Endothelial cell of umbilical vein (primary cell): ENCODE measurements at regions of chr12 and their contacts with region 1.

Region 1: DNA sequence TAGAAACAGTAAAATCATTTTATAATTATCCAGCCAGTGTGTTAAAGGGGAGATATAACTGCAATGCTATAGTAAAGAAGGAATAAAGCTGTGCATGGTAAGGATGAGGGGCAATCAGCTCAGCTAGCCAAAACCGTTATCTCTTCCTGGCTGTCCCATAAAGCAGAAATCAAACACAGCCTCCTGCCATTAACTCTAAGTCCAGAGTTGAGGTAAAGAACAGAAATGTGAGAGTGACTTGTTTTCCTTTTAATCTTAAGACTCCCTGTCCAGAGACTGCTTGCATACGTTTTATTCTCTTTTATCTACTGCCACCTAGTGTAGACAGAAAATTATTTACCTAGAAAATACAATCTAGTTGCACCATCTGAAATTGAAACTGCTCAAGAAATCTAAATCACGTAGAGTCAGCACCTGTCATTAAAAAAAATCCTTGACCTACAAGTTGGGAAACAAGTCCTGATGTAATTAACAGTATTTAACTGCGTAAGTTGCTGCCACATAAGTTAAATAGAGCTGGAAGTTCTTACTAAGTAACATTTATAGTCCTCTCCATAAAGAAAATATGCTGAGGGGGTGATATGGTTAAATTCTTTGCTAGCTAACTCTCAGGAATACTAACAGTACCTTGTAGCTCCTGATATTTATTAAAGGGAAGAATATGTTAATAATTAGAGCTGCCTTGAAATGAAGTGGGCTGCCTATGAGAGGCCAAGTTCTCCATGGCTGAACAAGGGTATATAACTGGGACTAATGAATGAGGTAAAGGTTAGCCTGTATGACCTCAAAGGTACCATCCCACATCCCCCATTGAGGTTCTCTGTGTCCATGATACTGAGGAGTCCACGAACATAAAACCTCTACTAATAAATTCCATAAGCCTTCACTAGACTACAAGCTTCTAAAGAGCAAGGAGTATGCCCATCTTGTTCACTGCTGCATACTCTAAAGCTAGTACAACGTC is 62.7 kb downstream of the GALNT4 start:
- DNase-seq: peak; percentile 85
- H3K4me3 ChIP-seq: peak overlapping the region in 1 of 3 experiments; percentile 21
- H3K27ac ChIP-seq: peak overlapping the region; percentile 79
- H3K4me1 ChIP-seq: peaks cover 24% of the 10 kb centered on the region
- H3K27me3 ChIP-seq: no peaks in the 10 kb centered on the region
- CTCF ChIP-seq: peak in 1 of 2 donors; percentile 26
- POLR2A ChIP-seq: no peak

Region 2: DNA sequence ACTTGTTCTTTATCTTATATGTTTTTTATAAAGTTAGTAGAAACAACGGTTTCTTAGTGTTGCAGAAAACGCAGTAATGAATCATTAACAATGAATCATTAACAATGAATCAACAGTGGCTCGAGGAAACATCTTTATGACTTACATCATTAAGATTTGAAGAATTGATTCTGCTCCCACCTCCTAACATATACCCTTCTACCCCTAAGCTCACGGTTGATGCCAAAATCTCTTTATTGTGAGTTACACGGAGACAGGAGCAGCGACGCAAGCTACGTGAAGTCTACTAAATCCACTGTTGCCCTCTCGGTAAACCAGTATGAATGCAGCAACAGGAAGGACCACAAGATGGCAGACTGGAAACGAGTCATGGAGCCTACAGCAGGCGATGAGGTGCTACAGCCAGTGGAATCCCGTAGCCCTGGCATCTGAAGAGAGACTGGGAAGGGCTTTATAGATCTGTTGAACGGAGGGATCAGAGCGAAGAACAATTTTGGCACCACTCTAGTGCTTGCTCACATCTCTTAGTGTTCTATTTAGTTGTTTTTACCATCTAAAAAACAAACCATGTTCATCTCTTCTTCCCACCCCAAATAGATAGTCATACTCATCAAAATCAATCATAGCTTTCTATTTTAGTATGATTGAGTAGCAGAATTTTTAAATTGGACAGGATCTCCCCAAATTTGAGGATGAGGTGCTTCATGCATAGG is 442.4 kb before region 1 on chr12:
- CTCF ChIA-PET with region 1: interaction called, 134 read pairs
- POLR2A ChIA-PET with region 1: no interaction called
- dilution Hi-C with region 1: no loop called
- intact Hi-C with region 1: loop called (anchors 1 kb)
- DNase-seq: peak; percentile 95
- H3K4me3 ChIP-seq: peak overlapping the region in 2 of 3 experiments; percentile 18 to 20
- H3K27ac ChIP-seq: no peak overlapping the region
- H3K4me1 ChIP-seq: peaks cover 8% of the 10 kb centered on the region
- H3K27me3 ChIP-seq: no peaks in the 10 kb centered on the region
- CTCF ChIP-seq: peak; percentile 81 to 83
- POLR2A ChIP-seq: no peak

Region 3: GRCh38 chr12:89051065-89051677 is 410.8 kb before region 1 on chr12:
- CTCF ChIA-PET with region 1: interaction called, 23 read pairs
- POLR2A ChIA-PET with region 1: no interaction called
- dilution Hi-C with region 1: loop called (anchors 25 kb)
- intact Hi-C with region 1: loop called (anchors 1 kb)
- DNase-seq: peak; percentile 88
- H3K4me3 ChIP-seq: no peak overlapping the region
- H3K27ac ChIP-seq: no peak overlapping the region
- H3K4me1 ChIP-seq: no peaks in the 10 kb centered on the region
- H3K27me3 ChIP-seq: no peaks in the 10 kb centered on the region
- CTCF ChIP-seq: peak; percentile 62
- POLR2A ChIP-seq: no peak

Region 4: DNA sequence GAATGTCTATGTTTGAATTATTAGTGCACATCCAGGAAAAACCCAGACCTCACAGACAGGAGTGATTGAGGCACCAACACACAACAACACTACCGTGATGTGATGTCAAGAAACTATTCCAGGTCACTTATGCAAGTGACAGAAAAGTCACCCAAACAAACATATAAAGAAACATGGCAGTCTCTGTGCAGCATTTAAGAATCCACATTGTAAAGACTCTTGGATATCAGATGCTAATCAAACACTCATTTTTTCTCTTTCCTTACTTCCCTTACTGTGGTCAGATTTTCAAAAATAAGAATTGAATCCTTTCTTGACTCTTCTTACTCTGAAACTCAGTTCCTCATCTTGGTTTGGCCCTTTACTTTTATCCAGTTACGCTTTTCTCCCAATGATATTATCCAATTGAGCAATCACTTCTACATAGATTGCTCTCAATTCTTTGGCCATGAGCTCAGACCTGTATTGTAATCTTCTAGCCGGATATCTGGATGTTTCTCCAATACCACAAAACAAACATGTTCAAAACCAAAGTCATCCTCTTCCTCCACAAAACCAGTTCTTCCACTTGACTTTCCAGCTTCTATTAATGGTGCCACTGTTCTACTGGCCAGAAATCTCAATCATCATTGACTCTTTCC is 225.1 kb before region 1 on chr12:
- CTCF ChIA-PET with region 1: no interaction called
- POLR2A ChIA-PET with region 1: no interaction called
- dilution Hi-C with region 1: no loop called
- intact Hi-C with region 1: loop called (anchors 5 kb)
- DNase-seq: no peak
- H3K4me3 ChIP-seq: no peak overlapping the region
- H3K27ac ChIP-seq: peak overlapping the region; percentile 39
- H3K4me1 ChIP-seq: peaks cover 44% of the 10 kb centered on the region
- H3K27me3 ChIP-seq: no peaks in the 10 kb centered on the region
- CTCF ChIP-seq: no peak
- POLR2A ChIP-seq: no peak

Region 5: GRCh38 chr12:89352492-89353187 is 109.3 kb before region 1 on chr12 and contains the start of gene DUSP6:
- CTCF ChIA-PET with region 1: interaction called, 163 read pairs
- POLR2A ChIA-PET with region 1: interaction called, 11 read pairs
- dilution Hi-C with region 1: loop called (anchors 25 kb)
- intact Hi-C with region 1: loop called (anchors 1 kb)
- DNase-seq: peak; percentile 100
- H3K4me3 ChIP-seq: peak within 1 kb of the TSS; percentile 72 to 97 (median 90)
- H3K27ac ChIP-seq: peak within 1 kb of the TSS; percentile 88
- H3K4me1 ChIP-seq: peaks cover 37% of the 10 kb centered on the region
- H3K27me3 ChIP-seq: no peaks in the 10 kb centered on the region
- CTCF ChIP-seq: no peak
- POLR2A ChIP-seq: no peak
- total RNA-seq, gene DUSP6: 148 and 200 TPM in 2 replicates

Region 6: GRCh38 chr12:89424389-89424788 is 37.5 kb before region 1 on chr12:
- CTCF ChIA-PET with region 1: no interaction called
- POLR2A ChIA-PET with region 1: no interaction called
- dilution Hi-C with region 1: no loop called
- intact Hi-C with region 1: no loop called
- DNase-seq: no peak
- H3K4me3 ChIP-seq: no peak overlapping the region
- H3K27ac ChIP-seq: no peak overlapping the region
- H3K4me1 ChIP-seq: no peaks in the 10 kb centered on the region
- H3K27me3 ChIP-seq: no peaks in the 10 kb centered on the region
- CTCF ChIP-seq: no peak
- POLR2A ChIP-seq: no peak

Region 7: GRCh38 chr12:89451841-89452251 is 10.1 kb before region 1 on chr12:
- CTCF ChIA-PET with region 1: interaction called, 19 read pairs
- POLR2A ChIA-PET with region 1: no interaction called
- dilution Hi-C with region 1: no loop called
- intact Hi-C with region 1: no loop called
- DNase-seq: peak; percentile 74
- H3K4me3 ChIP-seq: no peak overlapping the region
- H3K27ac ChIP-seq: peak overlapping the region; percentile 65
- H3K4me1 ChIP-seq: peaks cover 53% of the 10 kb centered on the region
- H3K27me3 ChIP-seq: no peaks in the 10 kb centered on the region
- CTCF ChIP-seq: no peak
- POLR2A ChIP-seq: peak; percentile 15

Region 8: DNA sequence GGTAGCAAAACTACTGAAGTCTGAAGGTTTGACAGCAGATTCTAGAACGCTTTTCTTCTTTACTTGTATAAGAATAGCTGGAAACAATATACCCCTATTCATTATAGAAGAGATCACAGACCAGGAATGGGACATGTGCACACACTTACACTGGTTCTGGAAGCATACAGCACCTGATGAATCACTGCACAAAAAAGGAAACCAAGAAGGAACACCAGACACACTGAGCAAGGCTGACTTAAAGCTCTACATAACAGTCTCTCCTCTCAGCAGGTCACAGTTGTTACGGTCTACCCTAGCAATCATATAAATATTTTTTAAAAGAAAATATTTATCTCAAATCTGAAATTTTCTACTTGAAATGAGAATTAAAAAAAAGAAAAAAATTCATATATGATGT is 233.2 kb after region 1 on chr12:
- CTCF ChIA-PET with region 1: no interaction called
- POLR2A ChIA-PET with region 1: no interaction called
- dilution Hi-C with region 1: no loop called
- intact Hi-C with region 1: no loop called
- DNase-seq: peak; percentile 38
- H3K4me3 ChIP-seq: no peak overlapping the region
- H3K27ac ChIP-seq: no peak overlapping the region
- H3K4me1 ChIP-seq: peaks cover 2% of the 10 kb centered on the region
- H3K27me3 ChIP-seq: no peaks in the 10 kb centered on the region
- CTCF ChIP-seq: no peak
- POLR2A ChIP-seq: no peak